CD14-positive monocyte (primary cell): ENCODE measurements at regions of chr6 and their contacts with region 1.

Region 1: DNA sequence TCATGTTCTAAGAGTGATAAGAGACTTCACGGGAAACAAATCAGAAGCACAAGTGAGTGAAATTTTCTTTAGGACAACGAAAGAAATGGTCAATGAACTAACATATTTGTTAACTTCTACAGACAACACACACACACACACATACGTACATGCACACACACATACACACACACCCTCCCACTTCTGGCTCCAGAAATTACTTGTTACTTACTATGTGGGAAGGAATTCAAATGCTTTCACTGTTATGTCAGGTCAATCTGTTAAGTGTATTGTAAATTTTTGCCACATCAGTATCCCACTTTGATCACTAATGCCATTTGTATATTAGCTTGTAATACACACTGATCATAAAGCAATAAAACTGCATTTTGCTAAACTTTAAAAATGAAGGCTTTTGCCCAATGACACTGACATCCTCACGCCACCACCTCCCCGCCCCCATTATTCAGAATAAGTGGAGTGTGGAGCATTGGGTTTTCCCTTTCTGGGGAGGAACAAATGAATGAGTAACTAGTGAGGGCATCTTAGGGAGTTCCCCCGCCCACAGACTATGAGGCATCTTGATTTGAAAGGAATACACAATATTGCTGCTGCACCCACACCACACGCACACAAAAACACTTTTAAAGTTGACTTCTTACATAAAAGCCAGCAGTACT is 76.2 kb downstream of the ATXN1 start:
- DNase-seq: peak; percentile 71 to 94 (median 85)
- H3K4me3 ChIP-seq: no peak overlapping the region
- H3K4me3 Mint-ChIP-seq: no peak overlapping the region
- H3K27ac ChIP-seq: peak overlapping the region in 1 of 2 donors; percentile 92
- H3K27ac Mint-ChIP-seq: peak overlapping the region; percentile 66 to 98 (median 85)
- H3K4me1 ChIP-seq: peaks cover 88 to 91% of the 10 kb centered on the region in 2 donors
- H3K4me1 Mint-ChIP-seq: peaks cover 86% of the 10 kb centered on the region
- H3K27me3 ChIP-seq: no peaks in the 10 kb centered on the region
- H3K27me3 Mint-ChIP-seq: no peaks in the 10 kb centered on the region
- CTCF ChIP-seq: no peak

Region 2: GRCh38 chr6:16585805-16586204 is 99.2 kb before region 1 on chr6:
- intact Hi-C with region 1: loop called in 1 of 2 experiments (anchors 10 kb)
- DNase-seq: peak; percentile 78 to 87 (median 80)
- H3K4me3 ChIP-seq: peak overlapping the region; percentile 54 to 98 (median 74)
- H3K4me3 Mint-ChIP-seq: peak overlapping the region; percentile 80 to 92
- H3K27ac ChIP-seq: peak overlapping the region; percentile 80 to 90
- H3K27ac Mint-ChIP-seq: peak overlapping the region; percentile 92 to 97 (median 94)
- H3K4me1 ChIP-seq: peaks cover 34 to 44% of the 10 kb centered on the region in 2 donors
- H3K4me1 Mint-ChIP-seq: peaks cover 39% of the 10 kb centered on the region
- H3K27me3 ChIP-seq: no peaks in the 10 kb centered on the region
- H3K27me3 Mint-ChIP-seq: peaks cover 0 to 2% (median 0%) of the 10 kb centered on the region in 3 donors
- CTCF ChIP-seq: no peak

Region 3: GRCh38 chr6:16704401-16705045 is 19.5 kb after region 1 on chr6:
- intact Hi-C with region 1: loop called in 1 of 2 experiments (anchors 2 kb)
- DNase-seq: peak; percentile 54 to 70 (median 68)
- H3K4me3 ChIP-seq: peak overlapping the region in 2 of 3 experiments; percentile 45 to 56
- H3K4me3 Mint-ChIP-seq: peak overlapping the region; percentile 74 to 81
- H3K27ac ChIP-seq: peak overlapping the region; percentile 56 to 80
- H3K27ac Mint-ChIP-seq: peak overlapping the region; percentile 95 to 97 (median 96)
- H3K4me1 ChIP-seq: peaks cover 71 to 77% of the 10 kb centered on the region in 2 donors
- H3K4me1 Mint-ChIP-seq: peaks cover 78% of the 10 kb centered on the region
- H3K27me3 ChIP-seq: no peaks in the 10 kb centered on the region
- H3K27me3 Mint-ChIP-seq: no peaks in the 10 kb centered on the region
- CTCF ChIP-seq: no peak

Region 4: DNA sequence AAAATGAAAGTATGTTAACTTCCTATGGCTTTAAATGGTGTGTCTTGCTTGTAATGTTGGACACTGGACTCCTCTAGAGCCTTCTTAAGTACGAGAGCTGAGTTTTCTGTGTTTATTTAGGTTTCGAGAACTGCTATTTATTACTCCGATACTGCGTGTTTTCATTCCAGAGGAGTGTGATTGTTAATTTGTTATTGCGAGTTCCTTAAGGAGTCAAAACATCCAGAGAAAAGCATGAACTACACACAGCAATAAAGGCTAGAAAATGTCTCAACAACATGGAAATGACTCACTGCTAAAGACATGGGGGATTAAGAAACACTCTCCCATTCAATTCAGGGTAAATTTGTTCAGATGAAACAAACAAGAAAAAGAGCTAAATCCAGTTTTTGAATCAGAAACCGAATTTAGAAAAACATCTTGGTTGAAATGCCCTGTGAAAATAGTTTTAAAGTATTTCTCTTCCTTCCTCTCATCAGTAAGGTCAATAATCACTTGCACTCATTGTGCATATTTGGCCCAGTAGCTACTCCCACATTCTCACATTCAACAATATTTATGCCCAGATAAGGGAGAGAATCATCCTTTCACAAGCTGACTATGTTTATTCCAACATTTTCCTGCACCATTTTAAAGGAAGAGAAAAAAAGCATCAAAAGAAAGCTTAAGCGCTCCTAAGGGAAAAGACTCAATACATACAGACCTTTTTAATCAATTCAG is 40.3 kb after region 1 on chr6:
- intact Hi-C with region 1: loop called in 1 of 2 experiments (anchors 5 kb)
- DNase-seq: peak in 2 of 3 donors; percentile 78 to 85
- H3K4me3 ChIP-seq: peak overlapping the region in 1 of 3 experiments; percentile 45
- H3K4me3 Mint-ChIP-seq: peak overlapping the region in 1 of 2 donors; percentile 21
- H3K27ac ChIP-seq: peak overlapping the region in 1 of 2 donors; percentile 87
- H3K27ac Mint-ChIP-seq: peak overlapping the region; percentile 95 to 99 (median 96)
- H3K4me1 ChIP-seq: peaks cover 62 to 69% of the 10 kb centered on the region in 2 donors
- H3K4me1 Mint-ChIP-seq: peaks cover 61% of the 10 kb centered on the region
- H3K27me3 ChIP-seq: no peaks in the 10 kb centered on the region
- H3K27me3 Mint-ChIP-seq: no peaks in the 10 kb centered on the region
- CTCF ChIP-seq: no peak